Panc1 (cell line): ENCODE measurements at regions of chr10 and their contacts with region 1.

Region 1: DNA sequence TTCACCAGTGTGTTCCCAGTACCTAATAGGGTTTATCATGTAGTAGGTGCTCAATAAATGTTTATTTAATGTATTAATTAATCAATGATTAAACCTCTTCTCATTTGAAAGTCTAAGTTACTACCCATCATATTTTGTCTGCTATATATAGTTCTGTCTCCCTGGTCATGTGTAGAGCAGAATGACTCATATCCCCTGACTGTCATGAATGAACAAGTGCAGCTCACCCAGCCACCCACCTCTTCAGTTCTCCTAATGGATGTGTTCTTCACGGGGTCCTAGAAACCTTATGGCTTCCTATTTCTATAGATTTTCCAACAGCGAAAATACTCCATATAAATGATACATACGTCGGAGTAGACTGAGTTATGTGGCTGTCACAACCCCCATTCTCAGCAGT is 64.5 kb downstream of the HIF1AN start:
- DNase-seq: no peak
- ATAC-seq: no peak
- H3K4me3 ChIP-seq: no peak overlapping the region
- H3K27ac ChIP-seq: no peak overlapping the region
- H3K4me1 ChIP-seq: no peaks in the 10 kb centered on the region
- H3K27me3 ChIP-seq: peaks cover 5% of the 10 kb centered on the region
- CTCF ChIP-seq: no peak

Region 2: GRCh38 chr10:100303724-100304319 is 296.4 kb before region 1 on chr10:
- CTCF ChIA-PET with region 1: no interaction called
- POLR2A ChIA-PET with region 1: no interaction called
- in situ Hi-C with region 1: no loop called
- intact Hi-C with region 1: no loop called
- DNase-seq: peak; percentile 41
- ATAC-seq: peak; percentile 89
- H3K4me3 ChIP-seq: no peak overlapping the region
- H3K27ac ChIP-seq: no peak overlapping the region
- H3K4me1 ChIP-seq: no peaks in the 10 kb centered on the region
- H3K27me3 ChIP-seq: peaks cover 8% of the 10 kb centered on the region; the same call in 1 of the 2 replicates
- CTCF ChIP-seq: peak; percentile 86

Region 3: DNA sequence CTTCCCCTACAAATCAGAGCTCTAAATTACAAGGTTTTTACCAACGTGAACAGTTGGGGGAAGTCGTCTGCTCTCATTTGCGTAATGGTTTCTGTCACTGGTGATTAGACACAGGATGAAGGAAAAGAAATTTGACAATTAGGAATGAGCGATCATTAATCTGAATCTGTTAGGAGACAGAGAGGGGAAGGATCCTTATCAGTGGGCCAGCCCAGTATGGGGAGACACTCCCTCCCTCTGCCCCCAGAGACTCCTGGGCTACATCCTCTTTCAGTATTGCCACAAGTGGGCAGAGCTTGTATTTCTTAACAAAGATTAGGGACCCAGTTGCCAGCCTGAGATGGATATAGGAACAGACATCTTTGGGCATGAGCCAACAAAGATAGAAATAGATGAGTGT is 49.0 kb before region 1 on chr10:
- CTCF ChIA-PET with region 1: no interaction called
- POLR2A ChIA-PET with region 1: interaction called, 17 read pairs
- in situ Hi-C with region 1: no loop called
- intact Hi-C with region 1: no loop called
- DNase-seq: no peak
- ATAC-seq: no peak
- H3K4me3 ChIP-seq: no peak overlapping the region
- H3K27ac ChIP-seq: no peak overlapping the region
- H3K4me1 ChIP-seq: no peaks in the 10 kb centered on the region
- H3K27me3 ChIP-seq: no peaks in the 10 kb centered on the region
- CTCF ChIP-seq: no peak